ENCODE measurements at regions of chr12 and their contacts with region 1.

Region 1: DNA sequence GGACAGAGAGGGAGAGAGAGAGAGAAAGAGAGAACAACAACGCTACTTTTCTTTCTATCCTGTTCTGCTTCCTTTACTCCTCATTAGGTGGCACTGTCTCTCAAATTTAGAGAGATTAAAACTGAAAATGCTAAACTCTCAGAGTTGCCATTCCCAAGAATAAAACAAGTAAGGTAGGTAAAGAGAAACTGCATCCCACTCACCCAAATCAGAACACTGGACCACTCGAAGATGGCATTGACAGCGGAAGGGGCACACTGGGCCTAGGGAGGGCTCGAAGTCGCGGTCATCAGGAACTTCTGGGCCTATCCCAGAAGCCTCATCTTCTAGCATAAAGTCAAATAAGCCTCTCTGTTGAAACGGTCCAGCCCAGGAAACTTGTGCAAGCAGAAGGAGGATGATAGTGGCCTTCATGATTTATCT is 4.5 kb downstream of the DCN start:
- DNase-seq: no peak
- ATAC-seq: peak; percentile 66
- H3K4me3 ChIP-seq: peak overlapping the region in 1 of 2 donors; percentile 64
- H3K27ac ChIP-seq: no peak overlapping the region
- H3K4me1 ChIP-seq: no peaks in the 10 kb centered on the region
- H3K27me3 ChIP-seq: no peaks in the 10 kb centered on the region

Region 2: GRCh38 chr12:91326058-91327027 is 148.2 kb after region 1 on chr12:
- intact Hi-C with region 1: loop called (anchors 1 to 5 kb)
- DNase-seq: no peak
- ATAC-seq: peak; percentile 81
- H3K4me3 ChIP-seq: no peak overlapping the region
- H3K27ac ChIP-seq: no peak overlapping the region
- H3K4me1 ChIP-seq: peaks cover 0 to 2% of the 10 kb centered on the region in 2 donors
- H3K27me3 ChIP-seq: no peaks in the 10 kb centered on the region

Region 3: DNA sequence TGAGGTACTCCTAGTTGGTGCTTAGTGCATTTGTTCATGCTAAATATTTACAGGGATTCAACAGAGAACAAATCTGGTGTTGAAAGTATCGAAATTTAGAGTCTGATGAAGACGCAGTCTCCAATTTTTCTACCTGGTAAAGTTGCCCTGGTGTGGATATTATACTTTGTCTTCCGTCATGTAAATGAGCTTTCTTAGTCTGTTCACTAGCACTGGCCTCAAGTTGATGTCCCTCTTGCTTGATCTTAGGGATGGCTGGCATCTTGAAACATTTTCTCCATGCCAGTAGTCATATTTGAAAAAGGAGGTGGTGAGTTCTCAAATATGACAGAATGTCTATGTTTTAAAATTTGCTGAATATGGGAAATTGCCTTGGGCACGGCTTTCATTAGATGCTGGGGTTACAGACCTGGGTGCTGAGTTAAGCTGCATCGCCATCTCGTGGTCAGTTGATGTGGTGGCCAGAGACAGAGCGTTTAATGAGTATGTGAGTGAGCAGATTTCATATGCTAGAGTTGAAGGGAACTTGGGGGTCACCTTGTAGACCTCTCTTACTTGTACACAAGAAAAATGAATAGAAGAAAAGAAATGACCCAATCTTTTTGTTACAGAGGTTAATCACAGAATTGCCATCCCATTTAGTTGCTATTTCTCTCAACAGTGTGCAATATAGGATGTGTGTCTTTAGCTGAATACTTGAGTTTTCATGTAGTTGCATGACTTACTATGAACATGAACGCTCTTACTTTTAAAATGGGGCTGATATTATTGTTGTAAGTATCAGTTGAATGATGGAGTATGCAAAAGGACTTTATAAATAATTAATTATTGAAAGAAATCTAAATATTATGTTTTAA is 177.2 kb after region 1 on chr12:
- intact Hi-C with region 1: loop called (anchors 1 to 2 kb)
- DNase-seq: peak; percentile 77 to 79
- ATAC-seq: peak; percentile 91
- H3K4me3 ChIP-seq: no peak overlapping the region
- H3K27ac ChIP-seq: no peak overlapping the region
- H3K4me1 ChIP-seq: no peaks in the 10 kb centered on the region
- H3K27me3 ChIP-seq: no peaks in the 10 kb centered on the region